Activated CD8-positive, alpha-beta memory T cell treated with anti-CD3 and anti-CD28 coated beads, Interleukin-2, amount 10 ng/mL, durations not matched to agents 7 days and 5 days (primary cell): ENCODE measurements at regions of chr1 and their contacts with region 1.

Region 1: DNA sequence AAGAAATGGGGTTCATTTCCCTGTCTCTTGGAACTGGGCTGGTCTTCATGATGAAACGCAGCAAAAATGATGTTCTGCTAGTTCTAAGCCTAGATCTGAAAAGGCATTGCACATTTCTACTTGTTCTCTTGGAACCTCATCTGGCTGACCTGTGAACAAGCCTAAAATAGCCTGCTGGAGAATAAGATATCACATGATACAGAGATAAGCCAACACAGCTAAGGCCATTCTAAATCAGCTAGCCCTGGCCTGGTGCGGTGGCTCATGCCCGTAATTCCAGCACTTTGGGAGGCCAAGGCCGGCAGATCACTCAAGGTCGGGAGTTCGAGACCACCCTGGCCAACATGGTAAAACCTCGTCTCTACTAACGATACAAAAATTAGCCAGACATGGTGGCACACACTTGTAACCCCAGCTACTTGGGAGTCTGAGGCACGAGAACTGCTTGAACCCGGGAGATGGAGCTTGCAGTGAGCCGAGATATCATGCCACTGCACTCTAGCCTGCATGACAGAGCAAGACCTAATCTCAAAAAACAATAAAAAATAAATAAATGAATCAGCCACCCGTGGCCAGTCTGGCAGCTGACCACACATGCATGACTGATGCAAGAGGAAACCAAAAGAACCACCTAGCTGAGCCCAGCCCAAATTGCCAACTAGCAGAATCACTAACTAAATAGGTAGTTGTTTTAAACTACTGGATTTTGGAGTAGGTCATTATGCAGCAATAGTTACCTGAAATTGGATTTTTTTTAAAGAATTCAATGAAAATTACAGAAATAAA is 18.0 kb downstream of the CD244 start:
- DNase-seq: peak; percentile 65
- ATAC-seq: no peak
- H3K4me3 Mint-ChIP-seq: no peak overlapping the region
- H3K27ac Mint-ChIP-seq: peak overlapping the region; percentile 41
- H3K4me1 Mint-ChIP-seq: peaks cover 51% of the 10 kb centered on the region
- H3K27me3 Mint-ChIP-seq: no peaks in the 10 kb centered on the region

Region 2: DNA sequence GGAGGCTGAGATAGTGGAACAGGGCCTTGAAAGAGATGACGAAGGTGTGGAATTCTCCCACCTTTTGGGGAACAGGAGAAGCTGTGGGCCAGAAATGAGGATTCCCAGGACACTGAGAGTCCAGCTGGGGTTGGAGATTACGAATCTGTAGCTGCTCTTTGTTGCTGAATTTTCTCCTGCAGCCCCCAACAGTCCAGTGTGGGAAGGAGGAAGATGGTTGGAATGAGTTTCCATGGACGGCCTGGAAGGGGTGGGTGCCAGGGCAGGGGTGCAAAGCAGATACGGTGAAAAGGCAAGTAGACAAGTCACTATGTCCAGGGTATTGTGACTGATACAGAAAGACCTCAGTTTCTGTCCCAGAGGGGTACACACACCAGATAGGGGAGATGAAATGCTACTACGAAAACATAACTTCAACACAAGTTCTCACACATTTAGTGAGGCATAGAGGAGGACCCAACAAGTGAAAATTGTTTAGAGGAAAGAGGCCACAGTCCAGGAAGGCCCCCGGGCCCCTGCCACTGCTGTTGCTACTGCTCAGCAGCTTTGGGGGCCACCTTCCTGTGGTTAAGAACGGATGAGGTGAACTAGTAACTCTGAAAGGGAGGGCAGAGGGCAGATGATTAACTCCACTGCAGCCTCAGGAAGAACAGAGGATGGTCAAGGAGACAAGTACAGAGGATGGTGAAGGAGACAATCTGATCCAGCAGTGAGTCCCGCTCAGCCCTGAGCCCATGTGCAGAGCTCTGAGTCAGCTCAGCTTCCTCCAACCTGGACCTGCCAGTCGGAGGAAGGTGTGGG is 10.7 kb after region 1 on chr1:
- CTCF ChIA-PET with region 1: interaction called, 85 read pairs
- DNase-seq: peak; percentile 85
- ATAC-seq: peak; percentile 83
- H3K4me3 Mint-ChIP-seq: no peak overlapping the region
- H3K27ac Mint-ChIP-seq: no peak overlapping the region
- H3K4me1 Mint-ChIP-seq: peaks cover 38% of the 10 kb centered on the region
- H3K27me3 Mint-ChIP-seq: no peaks in the 10 kb centered on the region

Region 3: DNA sequence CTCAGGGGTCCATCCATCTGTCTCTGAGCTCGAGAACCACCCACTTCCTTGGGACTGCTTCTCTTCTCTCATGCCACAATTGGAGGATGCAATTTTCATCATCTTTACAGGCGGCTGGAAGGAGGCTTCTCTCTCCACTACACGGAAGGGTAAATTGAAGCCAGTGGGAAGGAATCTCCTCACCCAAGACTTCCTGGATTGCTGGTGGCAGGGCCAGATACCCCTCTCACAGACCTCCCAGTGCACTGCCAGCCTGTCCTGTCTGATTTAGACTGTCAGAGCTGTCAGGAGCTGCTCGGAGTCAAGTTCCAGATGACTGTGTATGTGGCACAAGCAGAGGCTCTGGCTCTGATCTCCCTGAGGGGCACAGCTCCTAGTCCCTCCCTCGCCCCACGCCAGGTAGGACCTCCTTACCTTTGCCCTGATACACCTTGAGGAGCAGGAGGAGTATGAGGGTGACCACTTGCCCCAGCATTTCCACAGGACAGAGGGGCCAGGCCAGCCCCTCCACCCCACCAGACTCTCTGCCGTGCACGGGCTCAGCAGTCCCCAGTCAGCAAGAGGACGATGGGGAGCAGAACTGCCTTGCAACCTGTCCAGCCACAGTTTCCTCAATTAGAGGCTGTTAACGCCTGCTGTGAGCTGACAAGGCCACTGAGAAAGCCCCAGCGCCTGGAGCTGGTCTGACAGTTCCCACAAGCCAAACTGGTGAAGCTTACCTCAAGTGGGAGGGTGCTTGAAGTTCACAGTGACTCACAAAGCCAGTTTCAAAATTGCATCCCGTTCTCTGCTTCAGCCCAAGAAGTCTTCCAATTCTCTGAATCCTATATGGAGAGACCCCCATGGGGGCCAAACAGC is 17.8 kb after region 1 on chr1 and contains the start of gene CD244:
- CTCF ChIA-PET with region 1: interaction called, 85 read pairs
- DNase-seq: peak; percentile 95
- ATAC-seq: peak; percentile 92
- H3K4me3 Mint-ChIP-seq: peak within 1 kb of the TSS; percentile 89
- H3K27ac Mint-ChIP-seq: peak within 1 kb of the TSS; percentile 90
- H3K4me1 Mint-ChIP-seq: peaks cover 53% of the 10 kb centered on the region
- H3K27me3 Mint-ChIP-seq: no peaks in the 10 kb centered on the region
- total RNA-seq, gene CD244: 25.6 to 34.5 TPM

Region 4: DNA sequence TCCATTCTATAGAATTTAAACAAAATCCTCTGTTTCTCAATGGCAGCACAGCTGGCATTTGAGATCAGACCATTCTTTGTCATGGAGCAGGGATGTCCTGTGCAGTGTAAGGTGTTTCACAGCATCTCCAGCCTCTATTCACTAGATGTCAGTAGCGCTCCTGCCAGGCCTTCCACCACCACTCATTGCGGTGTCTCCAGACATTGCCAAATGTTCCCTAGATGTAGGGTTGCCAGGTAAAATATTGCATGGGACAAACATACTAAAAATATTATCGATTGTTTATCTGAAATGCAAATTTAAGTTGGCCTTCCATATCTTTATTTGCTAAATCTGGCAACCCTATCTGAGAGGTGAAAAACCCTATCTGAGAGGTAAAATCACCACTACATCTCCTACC is 98.3 kb after region 1 on chr1:
- CTCF ChIA-PET with region 1: no interaction called
- DNase-seq: no peak
- ATAC-seq: no peak
- H3K4me3 Mint-ChIP-seq: no peak overlapping the region
- H3K27ac Mint-ChIP-seq: no peak overlapping the region
- H3K4me1 Mint-ChIP-seq: no peaks in the 10 kb centered on the region
- H3K27me3 Mint-ChIP-seq: peaks cover 22% of the 10 kb centered on the region